ENCODE measurements at regions of chr10 and their contacts with region 1.

Region 1: GRCh38 chr10:101141616-101142532 is 10.8 kb downstream of the TLX1 start:
- DNase-seq: peak; percentile 75
- ATAC-seq: peak; percentile 92
- H3K4me3 Mint-ChIP-seq: no peak overlapping the region
- H3K27ac Mint-ChIP-seq: no peak overlapping the region
- H3K4me1 Mint-ChIP-seq: peaks cover 23% of the 10 kb centered on the region
- H3K27me3 Mint-ChIP-seq: peaks cover 75% of the 10 kb centered on the region
- CTCF ChIP-seq: no peak

Region 2: GRCh38 chr10:101060036-101060950 is 81.6 kb before region 1 on chr10:
- CTCF ChIA-PET with region 1: interaction called, 71 read pairs
- POLR2A ChIA-PET with region 1: interaction called, 4 read pairs
- intact Hi-C with region 1: loop called (anchors 1 kb)
- DNase-seq: peak; percentile 79
- ATAC-seq: peak; percentile 65
- H3K4me3 Mint-ChIP-seq: peak overlapping the region; percentile 98
- H3K27ac Mint-ChIP-seq: peak overlapping the region; percentile 95
- H3K4me1 Mint-ChIP-seq: peaks cover 34% of the 10 kb centered on the region
- H3K27me3 Mint-ChIP-seq: peaks cover 6% of the 10 kb centered on the region
- CTCF ChIP-seq: peak; percentile 62

Region 3: GRCh38 chr10:101095542-101096213 is 46.2 kb before region 1 on chr10:
- CTCF ChIA-PET with region 1: interaction called, 275 read pairs
- POLR2A ChIA-PET with region 1: interaction called, 4 read pairs
- intact Hi-C with region 1: loop called (anchors 1 kb)
- DNase-seq: peak; percentile 63
- ATAC-seq: peak; percentile 99
- H3K4me3 Mint-ChIP-seq: no peak overlapping the region
- H3K27ac Mint-ChIP-seq: no peak overlapping the region
- H3K4me1 Mint-ChIP-seq: no peaks in the 10 kb centered on the region
- H3K27me3 Mint-ChIP-seq: peaks cover 53% of the 10 kb centered on the region
- CTCF ChIP-seq: no peak

Region 4: GRCh38 chr10:101130984-101131961 is 10.6 kb before region 1 on chr10 and contains the start of gene TLX1:
- CTCF ChIA-PET with region 1: interaction called, 26 read pairs
- POLR2A ChIA-PET with region 1: no interaction called
- intact Hi-C with region 1: no loop called
- DNase-seq: peak; percentile 23
- ATAC-seq: no peak
- H3K4me3 Mint-ChIP-seq: peak within 1 kb of the TSS; percentile 41
- H3K27ac Mint-ChIP-seq: no peak within 1 kb of the TSS
- H3K4me1 Mint-ChIP-seq: peaks cover 40% of the 10 kb centered on the region
- H3K27me3 Mint-ChIP-seq: peaks cover 73% of the 10 kb centered on the region
- CTCF ChIP-seq: no peak
- total RNA-seq, gene TLX1: not detected in 2 replicates

Measured in activated B cell treated with CpG ODN at 0.5 μM for 24 hours (primary cell).